ENCODE measurements at regions of chr15 and their contacts with region 1.

Region 1: DNA sequence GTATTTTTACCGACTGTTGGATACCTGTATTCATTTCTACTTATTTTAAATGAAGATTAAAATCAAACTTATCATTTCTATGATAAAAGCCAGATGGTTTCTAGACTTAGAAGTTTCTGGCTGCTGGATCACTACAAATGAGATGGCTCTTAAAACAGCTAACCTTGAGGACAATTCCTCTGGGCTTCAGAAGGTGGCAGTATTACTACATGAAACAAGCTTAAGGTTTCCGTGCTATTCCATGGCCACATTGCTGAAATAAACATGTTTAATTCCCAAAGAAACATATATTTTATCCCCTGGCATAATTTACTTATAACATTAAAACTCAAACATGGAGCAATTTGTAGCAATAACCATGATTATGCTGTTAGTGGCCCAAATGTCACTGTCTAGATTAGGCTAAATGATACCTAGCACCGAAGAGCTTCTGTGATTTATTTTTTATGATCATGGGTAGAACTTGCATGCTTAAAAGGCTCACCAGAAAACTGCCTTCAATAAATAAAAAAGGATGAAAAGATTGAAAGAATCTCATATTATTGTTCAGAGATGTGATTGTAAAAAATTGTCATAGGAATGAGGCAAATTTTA is 204.0 kb upstream of the NANOGP8 start:
- DNase-seq: no peak
- H3K4me3 ChIP-seq: no peak overlapping the region
- H3K27ac ChIP-seq: no peak overlapping the region
- H3K4me1 ChIP-seq: no peaks in the 10 kb centered on the region
- H3K27me3 ChIP-seq: no peaks in the 10 kb centered on the region
- CTCF ChIP-seq: peak; percentile 81

Region 2: GRCh38 chr15:35444557-35445204 is 155.6 kb after region 1 on chr15:
- intact Hi-C with region 1: loop called (anchors 5 kb)
- DNase-seq: no peak
- H3K4me3 ChIP-seq: no peak overlapping the region
- H3K27ac ChIP-seq: no peak overlapping the region
- H3K4me1 ChIP-seq: no peaks in the 10 kb centered on the region
- H3K27me3 ChIP-seq: no peaks in the 10 kb centered on the region
- CTCF ChIP-seq: peak; percentile 83

Measured in left ventricle myocardium inferior (tissue), 1 donor.